ENCODE measurements at regions of chr1 and their contacts with region 1.

Region 1: GRCh38 chr1:63691701-63692425 is 82.0 kb upstream of the ROR1 start:
- DNase-seq: peak; percentile 52
- ATAC-seq: peak; percentile 60
- H3K4me3 Mint-ChIP-seq: no peak overlapping the region
- H3K27ac Mint-ChIP-seq: no peak overlapping the region
- H3K4me1 Mint-ChIP-seq: no peaks in the 10 kb centered on the region
- H3K27me3 Mint-ChIP-seq: no peaks in the 10 kb centered on the region

Region 2: GRCh38 chr1:63042278-63042677 is 649.6 kb before region 1 on chr1:
- CTCF ChIA-PET with region 1: no interaction called
- POLR2A ChIA-PET with region 1: no interaction called
- intact Hi-C with region 1: no loop called
- DNase-seq: no peak
- ATAC-seq: no peak
- H3K4me3 Mint-ChIP-seq: no peak overlapping the region
- H3K27ac Mint-ChIP-seq: no peak overlapping the region
- H3K4me1 Mint-ChIP-seq: no peaks in the 10 kb centered on the region
- H3K27me3 Mint-ChIP-seq: no peaks in the 10 kb centered on the region

Region 3: GRCh38 chr1:63350320-63350719 is 341.5 kb before region 1 on chr1:
- CTCF ChIA-PET with region 1: no interaction called
- POLR2A ChIA-PET with region 1: no interaction called
- intact Hi-C with region 1: no loop called
- DNase-seq: no peak
- ATAC-seq: no peak
- H3K4me3 Mint-ChIP-seq: no peak overlapping the region
- H3K27ac Mint-ChIP-seq: no peak overlapping the region
- H3K4me1 Mint-ChIP-seq: no peaks in the 10 kb centered on the region
- H3K27me3 Mint-ChIP-seq: peaks cover 17% of the 10 kb centered on the region

Region 4: GRCh38 chr1:63917571-63918417 is 225.9 kb after region 1 on chr1:
- CTCF ChIA-PET with region 1: interaction called, 7 read pairs
- POLR2A ChIA-PET with region 1: no interaction called
- intact Hi-C with region 1: loop called (anchors 1 to 5 kb)
- DNase-seq: peak; percentile 51
- ATAC-seq: no peak
- H3K4me3 Mint-ChIP-seq: no peak overlapping the region
- H3K27ac Mint-ChIP-seq: no peak overlapping the region
- H3K4me1 Mint-ChIP-seq: no peaks in the 10 kb centered on the region
- H3K27me3 Mint-ChIP-seq: peaks cover 2% of the 10 kb centered on the region